Naive thymus-derived CD4-positive, alpha-beta T cell (primary cell): ENCODE measurements at regions of chr5 and their contacts with region 1.

Region 1: GRCh38 chr5:67003935-67004729 is 192.5 kb downstream of the CD180 start:
- DNase-seq: peak; percentile 71 to 91 (median 87)
- ATAC-seq: peak; percentile 91
- H3K4me3 ChIP-seq: peak overlapping the region; percentile 97
- H3K4me3 Mint-ChIP-seq: peak overlapping the region; percentile 92 to 99 (median 97)
- H3K27ac ChIP-seq: peak overlapping the region; percentile 75
- H3K27ac Mint-ChIP-seq: peak overlapping the region; percentile 93 to 98 (median 95)
- H3K4me1 ChIP-seq: peaks cover 7 to 28% of the 10 kb centered on the region in 2 donors
- H3K4me1 Mint-ChIP-seq: peaks cover 25 to 62% (median 55%) of the 10 kb centered on the region in 7 donors
- H3K27me3 ChIP-seq: no peaks in the 10 kb centered on the region
- H3K27me3 Mint-ChIP-seq: no peaks in the 10 kb centered on the region

Region 2: GRCh38 chr5:65624571-65625555 is 1379.3 kb before region 1 on chr5 and contains the starts of genes SHLD3 and TRAPPC13:
- CTCF ChIA-PET with region 1: no interaction called
- POLR2A ChIA-PET with region 1: no interaction called
- intact Hi-C with region 1: loop called (anchors 1 to 10 kb)
- DNase-seq: peak; percentile 57 to 92 (median 91)
- ATAC-seq: peak; percentile 86
- H3K4me3 ChIP-seq: peak within 1 kb of the TSS; percentile 75
- H3K4me3 Mint-ChIP-seq: peak within 1 kb of the TSS; percentile 93 to 100 (median 98)
- H3K27ac ChIP-seq: peak within 1 kb of the TSS; percentile 92
- H3K27ac Mint-ChIP-seq: peak within 1 kb of the TSS; percentile 97 to 100 (median 98)
- H3K4me1 ChIP-seq: peaks cover 20% of the 10 kb centered on the region in 2 donors
- H3K4me1 Mint-ChIP-seq: peaks cover 14 to 73% (median 51%) of the 10 kb centered on the region in 7 donors
- H3K27me3 ChIP-seq: no peaks in the 10 kb centered on the region
- H3K27me3 Mint-ChIP-seq: peaks cover 0 to 3% (median 0%) of the 10 kb centered on the region in 5 donors
- total RNA-seq, gene SHLD3: 4.8 to 11.3 (median 5.8) TPM
- total RNA-seq, gene TRAPPC13: 18.2 to 23.1 (median 20.8) TPM

Region 3: DNA sequence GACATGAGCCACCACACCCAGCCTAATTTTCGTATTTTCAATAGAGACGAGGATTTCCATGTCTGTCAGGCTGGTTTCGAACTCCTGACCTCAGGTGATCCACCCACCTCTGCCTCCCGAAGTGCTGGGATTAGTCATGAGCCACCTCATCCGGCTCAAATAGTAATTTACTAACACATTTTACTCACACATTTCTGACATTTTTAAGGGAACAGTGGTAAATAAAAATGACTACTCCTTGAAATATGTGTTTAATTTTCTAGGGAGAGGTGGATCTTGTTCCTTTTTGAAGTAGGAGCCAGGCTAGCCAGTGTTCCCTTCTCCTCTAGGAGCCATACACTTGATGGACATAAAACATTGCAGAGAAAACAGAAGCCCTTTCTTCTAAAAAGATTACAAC is 1133.0 kb before region 1 on chr5:
- CTCF ChIA-PET with region 1: no interaction called
- POLR2A ChIA-PET with region 1: no interaction called
- intact Hi-C with region 1: no loop called
- DNase-seq: no peak
- ATAC-seq: no peak
- H3K4me3 ChIP-seq: no peak overlapping the region
- H3K4me3 Mint-ChIP-seq: no peak overlapping the region
- H3K27ac ChIP-seq: no peak overlapping the region
- H3K27ac Mint-ChIP-seq: peak overlapping the region in 1 of 9 donors; percentile 1
- H3K4me1 ChIP-seq: peaks cover 0 to 8% of the 10 kb centered on the region in 2 donors
- H3K4me1 Mint-ChIP-seq: peaks cover 11 to 28% (median 18%) of the 10 kb centered on the region in 7 donors
- H3K27me3 ChIP-seq: no peaks in the 10 kb centered on the region
- H3K27me3 Mint-ChIP-seq: no peaks in the 10 kb centered on the region

Region 4: GRCh38 chr5:66828548-66829357 is 175.4 kb before region 1 on chr5:
- CTCF ChIA-PET with region 1: no interaction called
- POLR2A ChIA-PET with region 1: no interaction called
- intact Hi-C with region 1: loop called (anchors 1 to 5 kb)
- DNase-seq: peak; percentile 14 to 67 (median 55)
- ATAC-seq: peak; percentile 93
- H3K4me3 ChIP-seq: peak overlapping the region; percentile 36
- H3K4me3 Mint-ChIP-seq: peak overlapping the region; percentile 72 to 95 (median 84)
- H3K27ac ChIP-seq: peak overlapping the region; percentile 31
- H3K27ac Mint-ChIP-seq: peak overlapping the region; percentile 12 to 92 (median 71)
- H3K4me1 ChIP-seq: peaks cover 0 to 4% of the 10 kb centered on the region in 2 donors
- H3K4me1 Mint-ChIP-seq: peaks cover 12 to 69% (median 19%) of the 10 kb centered on the region in 7 donors
- H3K27me3 ChIP-seq: no peaks in the 10 kb centered on the region
- H3K27me3 Mint-ChIP-seq: peaks cover 0 to 50% (median 26%) of the 10 kb centered on the region in 5 donors

Region 5: DNA sequence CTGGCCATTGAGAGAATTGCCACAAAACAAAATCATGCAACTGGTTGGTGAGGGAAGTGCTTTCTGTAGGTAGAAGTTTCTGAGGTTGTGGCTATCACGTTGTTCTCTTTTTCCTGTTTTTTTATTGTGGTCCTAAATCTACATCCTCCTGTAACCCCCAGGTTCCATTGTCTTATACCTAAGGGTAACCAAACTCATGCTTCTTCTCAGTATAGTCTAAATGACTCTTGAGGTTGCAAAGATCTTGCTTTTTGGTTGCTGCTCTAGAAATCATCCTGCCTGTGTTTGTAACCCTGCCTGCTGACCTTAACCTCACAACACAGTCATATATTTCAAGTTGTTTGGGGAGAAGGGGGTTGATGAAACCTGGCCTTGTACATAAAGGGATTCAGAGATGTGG is 80.7 kb before region 1 on chr5:
- CTCF ChIA-PET with region 1: no interaction called
- POLR2A ChIA-PET with region 1: no interaction called
- intact Hi-C with region 1: no loop called
- DNase-seq: no peak
- ATAC-seq: no peak
- H3K4me3 ChIP-seq: no peak overlapping the region
- H3K4me3 Mint-ChIP-seq: peak overlapping the region in 1 of 10 donors; percentile 15
- H3K27ac ChIP-seq: no peak overlapping the region
- H3K27ac Mint-ChIP-seq: peak overlapping the region in 1 of 9 donors; percentile 20
- H3K4me1 ChIP-seq: no peaks in the 10 kb centered on the region
- H3K4me1 Mint-ChIP-seq: peaks cover 0 to 11% (median 0%) of the 10 kb centered on the region in 7 donors
- H3K27me3 ChIP-seq: no peaks in the 10 kb centered on the region
- H3K27me3 Mint-ChIP-seq: peaks cover 0 to 12% (median 7%) of the 10 kb centered on the region in 5 donors

Region 6: DNA sequence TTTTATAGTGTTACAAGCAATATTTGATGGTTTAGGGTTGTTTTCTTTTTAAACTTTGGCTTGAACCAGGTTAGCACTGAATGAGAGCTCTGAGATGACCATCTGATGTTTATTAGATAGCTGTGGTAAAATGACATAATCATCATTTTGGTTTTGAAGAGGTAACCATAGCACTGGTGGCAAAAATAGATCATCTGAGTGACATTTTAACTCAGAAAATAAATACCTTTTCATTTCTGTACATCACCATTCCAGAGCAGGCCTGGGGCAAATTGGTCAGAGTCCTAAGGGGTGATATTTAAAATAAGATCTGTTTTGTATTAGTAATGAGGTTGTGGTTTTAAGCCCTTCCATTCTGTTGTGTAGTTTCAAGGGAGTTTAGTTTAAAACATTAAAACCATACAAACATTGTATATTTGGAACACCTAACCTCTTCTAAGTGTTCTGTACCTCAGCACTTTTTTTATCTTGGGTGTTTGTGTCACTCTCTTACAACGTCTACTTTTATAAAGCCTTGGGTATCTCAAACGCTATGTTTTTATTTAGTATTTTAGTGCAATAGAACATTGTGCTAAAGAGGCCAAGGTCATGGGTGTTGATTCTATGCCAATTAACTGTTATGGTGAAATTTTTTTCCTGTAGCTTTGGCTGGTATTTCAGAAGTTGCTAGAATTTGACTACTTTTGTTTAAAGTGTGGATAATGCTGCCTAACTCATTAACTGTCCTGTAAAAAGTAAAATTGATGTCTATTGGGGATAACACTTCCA is 26.3 kb after region 1 on chr5:
- CTCF ChIA-PET with region 1: no interaction called
- POLR2A ChIA-PET with region 1: no interaction called
- intact Hi-C with region 1: loop called in 1 of 2 experiments (anchors 2 kb)
- DNase-seq: no peak
- ATAC-seq: no peak
- H3K4me3 ChIP-seq: no peak overlapping the region
- H3K4me3 Mint-ChIP-seq: no peak overlapping the region
- H3K27ac ChIP-seq: no peak overlapping the region
- H3K27ac Mint-ChIP-seq: peak overlapping the region in 2 of 9 donors; percentile 2 to 37
- H3K4me1 ChIP-seq: no peaks in the 10 kb centered on the region
- H3K4me1 Mint-ChIP-seq: peaks cover 16 to 80% (median 63%) of the 10 kb centered on the region in 7 donors
- H3K27me3 ChIP-seq: peaks cover 0 to 3% of the 10 kb centered on the region in 2 donors
- H3K27me3 Mint-ChIP-seq: no peaks in the 10 kb centered on the region

Region 7: GRCh38 chr5:67095346-67096171 is 91.4 kb after region 1 on chr5:
- CTCF ChIA-PET with region 1: no interaction called
- POLR2A ChIA-PET with region 1: no interaction called
- intact Hi-C with region 1: loop called in 1 of 2 experiments (anchors 5 kb)
- DNase-seq: no peak
- ATAC-seq: no peak
- H3K4me3 ChIP-seq: no peak overlapping the region
- H3K4me3 Mint-ChIP-seq: no peak overlapping the region
- H3K27ac ChIP-seq: no peak overlapping the region
- H3K27ac Mint-ChIP-seq: no peak overlapping the region
- H3K4me1 ChIP-seq: no peaks in the 10 kb centered on the region
- H3K4me1 Mint-ChIP-seq: peaks cover 0 to 12% (median 4%) of the 10 kb centered on the region in 7 donors
- H3K27me3 ChIP-seq: no peaks in the 10 kb centered on the region
- H3K27me3 Mint-ChIP-seq: no peaks in the 10 kb centered on the region

Region 8: DNA sequence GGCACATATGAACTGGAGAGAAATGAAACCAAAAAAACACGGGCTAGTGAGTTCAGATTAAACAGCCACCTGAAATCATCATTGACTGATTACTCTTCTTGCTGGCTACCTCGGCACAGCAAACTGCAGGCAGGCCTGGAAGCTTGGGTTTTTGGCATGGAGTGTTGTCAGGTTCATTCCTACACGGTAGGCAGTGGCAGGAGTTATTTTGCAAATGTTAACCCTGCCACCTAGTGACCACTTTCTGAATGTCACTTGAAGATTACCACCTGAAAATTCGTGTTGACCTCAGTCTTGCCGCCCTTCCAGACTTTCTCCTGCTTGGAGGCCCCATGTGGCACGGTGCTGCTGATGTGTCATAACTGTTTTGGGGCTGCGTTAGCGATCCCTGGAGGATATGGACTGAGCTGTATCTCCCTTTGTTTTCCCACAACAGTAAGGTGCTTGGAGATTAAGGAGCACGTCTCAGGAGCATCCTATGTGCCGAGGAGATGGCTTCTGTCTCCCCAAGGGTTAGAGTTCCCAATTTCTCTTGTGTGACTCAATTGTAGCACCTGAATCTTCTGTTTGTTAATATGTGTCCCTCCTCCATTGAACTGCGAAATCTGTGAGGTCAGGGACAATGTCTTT is 205.1 kb after region 1 on chr5:
- CTCF ChIA-PET with region 1: no interaction called
- POLR2A ChIA-PET with region 1: interaction called, 5 read pairs
- intact Hi-C with region 1: loop called (anchors 1 kb)
- DNase-seq: peak; percentile 33 to 77 (median 69)
- ATAC-seq: peak; percentile 74
- H3K4me3 ChIP-seq: peak overlapping the region; percentile 14
- H3K4me3 Mint-ChIP-seq: peak overlapping the region in 5 of 10 donors; percentile 47 to 55 (median 50)
- H3K27ac ChIP-seq: peak overlapping the region; percentile 0
- H3K27ac Mint-ChIP-seq: peak overlapping the region; percentile 78 to 98 (median 85)
- H3K4me1 ChIP-seq: peaks cover 50 to 54% of the 10 kb centered on the region in 2 donors
- H3K4me1 Mint-ChIP-seq: peaks cover 39 to 71% (median 66%) of the 10 kb centered on the region in 7 donors
- H3K27me3 ChIP-seq: no peaks in the 10 kb centered on the region
- H3K27me3 Mint-ChIP-seq: peaks cover 0 to 2% (median 0%) of the 10 kb centered on the region in 5 donors

Region 9: GRCh38 chr5:68279984-68280383 is 1275.9 kb after region 1 on chr5:
- CTCF ChIA-PET with region 1: no interaction called
- POLR2A ChIA-PET with region 1: no interaction called
- intact Hi-C with region 1: loop called (anchors 5 to 10 kb)
- DNase-seq: peak in 8 of 9 donors; percentile 32 to 84 (median 80)
- ATAC-seq: peak; percentile 94
- H3K4me3 ChIP-seq: peak overlapping the region; percentile 63
- H3K4me3 Mint-ChIP-seq: peak overlapping the region; percentile 84 to 95 (median 90)
- H3K27ac ChIP-seq: peak overlapping the region; percentile 70
- H3K27ac Mint-ChIP-seq: peak overlapping the region; percentile 94 to 98 (median 97)
- H3K4me1 ChIP-seq: peaks cover 59 to 65% of the 10 kb centered on the region in 2 donors
- H3K4me1 Mint-ChIP-seq: peaks cover 39 to 94% (median 81%) of the 10 kb centered on the region in 7 donors
- H3K27me3 ChIP-seq: no peaks in the 10 kb centered on the region
- H3K27me3 Mint-ChIP-seq: no peaks in the 10 kb centered on the region

Region 10: GRCh38 chr5:68415177-68416085 is 1411.3 kb after region 1 on chr5:
- CTCF ChIA-PET with region 1: no interaction called
- POLR2A ChIA-PET with region 1: no interaction called
- intact Hi-C with region 1: no loop called
- DNase-seq: no peak
- ATAC-seq: no peak
- H3K4me3 ChIP-seq: no peak overlapping the region
- H3K4me3 Mint-ChIP-seq: no peak overlapping the region
- H3K27ac ChIP-seq: no peak overlapping the region
- H3K27ac Mint-ChIP-seq: no peak overlapping the region
- H3K4me1 ChIP-seq: no peaks in the 10 kb centered on the region
- H3K4me1 Mint-ChIP-seq: peaks cover 4 to 10% (median 9%) of the 10 kb centered on the region in 7 donors
- H3K27me3 ChIP-seq: no peaks in the 10 kb centered on the region
- H3K27me3 Mint-ChIP-seq: peaks cover 0 to 8% (median 0%) of the 10 kb centered on the region in 5 donors